ENCODE measurements at regions of chr9 and their contacts with region 1.

Region 1: DNA sequence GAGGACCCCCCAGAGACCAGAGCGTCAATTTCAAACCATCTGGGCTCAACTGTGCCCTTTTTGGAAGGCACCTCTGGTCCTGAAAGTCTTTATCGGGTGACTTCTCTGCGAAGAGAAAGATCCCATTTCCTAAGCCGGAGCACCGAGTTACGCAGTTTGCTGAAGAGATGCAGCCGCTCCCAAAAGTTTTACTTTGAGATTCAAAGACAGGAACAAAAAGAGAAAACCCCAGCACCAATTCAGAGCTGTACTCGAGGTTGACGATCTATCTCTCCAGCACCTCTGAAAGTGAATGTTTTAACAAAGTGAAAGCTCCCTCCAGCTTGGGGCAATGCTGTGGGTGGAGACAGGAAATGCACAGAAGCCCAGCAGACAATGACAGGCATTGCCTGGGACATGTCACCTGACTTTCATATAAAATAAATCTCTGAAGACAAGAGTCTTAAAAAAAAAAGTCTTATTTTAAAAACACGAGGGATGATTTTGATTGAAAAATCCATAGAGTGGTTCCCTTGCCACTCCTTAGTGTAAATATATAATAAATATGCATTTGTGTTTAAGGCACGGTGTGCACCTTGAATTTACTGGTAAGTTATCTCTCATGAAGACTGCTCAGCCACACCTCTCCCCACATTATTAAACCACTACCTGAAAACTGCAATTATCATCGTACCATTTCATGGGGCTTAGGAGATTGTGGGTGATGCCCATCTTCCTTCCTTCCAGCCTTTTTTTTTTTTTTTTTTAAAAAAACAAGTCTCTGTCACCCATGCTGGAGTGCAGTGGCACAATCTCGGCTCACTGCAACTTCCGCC is 79.9 kb downstream of the FNBP1 start:
- DNase-seq: peak; percentile 60 to 93 (median 66)
- ATAC-seq: peak; percentile 94
- H3K4me3 ChIP-seq: peak overlapping the region; percentile 64
- H3K4me3 Mint-ChIP-seq: peak overlapping the region; percentile 83
- H3K27ac ChIP-seq: peak overlapping the region; percentile 94 to 95
- H3K27ac Mint-ChIP-seq: peak overlapping the region; percentile 99
- H3K4me1 ChIP-seq: peaks cover 59% of the 10 kb centered on the region
- H3K4me1 Mint-ChIP-seq: peaks cover 80% of the 10 kb centered on the region
- H3K27me3 ChIP-seq: no peaks in the 10 kb centered on the region
- H3K27me3 Mint-ChIP-seq: no peaks in the 10 kb centered on the region
- CTCF ChIP-seq: no peak

Region 2: DNA sequence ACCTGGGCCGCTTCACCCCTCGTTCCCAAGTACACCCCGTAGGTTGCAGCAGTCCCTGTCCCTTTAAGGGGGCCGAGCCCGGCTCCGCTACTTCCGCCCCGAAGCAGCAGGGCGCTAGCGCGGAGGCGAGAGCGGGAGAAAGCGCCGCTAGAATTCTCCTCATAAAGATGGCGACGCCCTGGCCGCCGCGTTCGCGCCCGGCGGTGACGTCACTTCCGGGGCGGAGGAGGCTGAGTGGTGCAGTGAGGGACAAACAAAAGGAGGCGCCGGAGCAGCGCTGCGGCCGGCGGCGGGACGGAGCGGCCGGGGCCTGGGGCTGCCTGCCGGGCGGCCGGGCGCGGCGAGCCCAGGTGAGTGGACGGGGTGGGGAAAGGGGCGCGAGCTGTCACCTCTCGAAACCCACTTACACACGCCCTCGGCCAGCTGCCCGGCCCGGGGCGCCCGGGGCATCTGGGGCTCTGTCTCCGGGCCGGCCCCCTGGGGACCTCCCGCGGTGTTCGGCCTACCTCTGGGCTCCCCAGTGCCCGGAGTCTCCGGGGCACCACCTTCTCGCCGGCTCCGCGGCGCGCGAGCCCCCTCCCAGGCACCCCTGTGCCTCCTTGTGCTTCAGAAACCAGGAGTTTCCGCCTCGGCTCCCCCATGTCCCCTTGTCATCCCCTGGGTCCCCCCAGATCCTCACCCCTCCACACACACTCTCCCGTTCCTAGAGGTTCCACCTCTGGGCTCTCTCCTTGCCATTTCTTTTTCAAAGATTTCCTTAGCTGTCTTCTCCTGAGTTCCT is 1081.0 kb before region 1 on chr9 and contains the starts of genes KYAT1 and LRRC8A:
- CTCF ChIA-PET with region 1: no interaction called
- POLR2A ChIA-PET with region 1: no interaction called
- intact Hi-C with region 1: no loop called
- DNase-seq: peak; percentile 95 to 99 (median 98)
- ATAC-seq: peak; percentile 93
- H3K4me3 ChIP-seq: peak within 1 kb of the TSS; percentile 98
- H3K4me3 Mint-ChIP-seq: peak within 1 kb of the TSS; percentile 98
- H3K27ac ChIP-seq: peak within 1 kb of the TSS; percentile 72 to 77
- H3K27ac Mint-ChIP-seq: peak within 1 kb of the TSS; percentile 90
- H3K4me1 ChIP-seq: peaks cover 55% of the 10 kb centered on the region
- H3K4me1 Mint-ChIP-seq: peaks cover 76% of the 10 kb centered on the region
- H3K27me3 ChIP-seq: no peaks in the 10 kb centered on the region
- H3K27me3 Mint-ChIP-seq: no peaks in the 10 kb centered on the region
- CTCF ChIP-seq: no peak
- total RNA-seq, gene KYAT1: 2.8 to 4.7 TPM
- total RNA-seq, gene LRRC8A: 35.0 to 35.8 TPM

Region 3: DNA sequence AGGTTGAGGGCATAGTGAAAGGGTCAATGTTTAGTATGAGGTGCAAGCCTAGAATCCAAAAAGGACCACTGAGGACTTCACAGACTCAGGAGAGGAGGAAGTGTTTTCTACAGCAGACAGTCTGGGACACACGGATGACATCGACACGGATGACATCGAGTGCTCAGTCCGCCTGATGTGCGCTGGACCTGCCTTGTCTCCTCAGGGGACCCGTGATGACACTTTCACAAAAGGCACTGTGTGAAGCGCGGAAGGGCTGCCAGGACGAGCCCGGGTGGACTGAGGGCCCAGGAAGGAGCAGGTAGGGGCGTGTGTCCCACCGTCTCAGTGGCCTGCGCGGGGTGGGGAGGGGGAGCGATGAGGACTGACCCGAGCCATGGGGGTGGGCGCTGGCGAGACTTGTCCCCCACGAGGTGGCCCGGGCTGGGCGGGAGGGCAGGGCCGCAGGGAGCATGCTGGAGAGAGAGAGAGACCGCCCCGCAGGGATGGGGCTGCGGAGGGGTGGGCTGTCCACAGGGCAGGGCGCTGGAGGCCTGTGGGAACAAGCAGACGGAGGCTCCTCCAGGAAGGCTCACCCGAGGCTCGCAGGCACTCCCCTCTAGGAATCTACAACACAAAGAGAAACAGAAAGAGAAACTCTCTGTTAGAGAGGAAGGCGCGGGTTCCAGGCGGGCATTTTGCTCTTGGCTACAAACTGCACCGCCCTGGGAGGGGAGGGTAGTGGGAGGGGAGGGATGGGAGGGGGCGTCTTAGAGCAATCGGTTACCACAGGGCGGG is 73.0 kb before region 1 on chr9:
- CTCF ChIA-PET with region 1: interaction called, 8 read pairs
- POLR2A ChIA-PET with region 1: interaction called, 55 read pairs
- intact Hi-C with region 1: loop called (anchors 1 to 5 kb)
- DNase-seq: peak; percentile 46 to 91 (median 64)
- ATAC-seq: no peak
- H3K4me3 ChIP-seq: peak overlapping the region; percentile 50
- H3K4me3 Mint-ChIP-seq: peak overlapping the region; percentile 96
- H3K27ac ChIP-seq: peak overlapping the region; percentile 91 to 99
- H3K27ac Mint-ChIP-seq: peak overlapping the region; percentile 99
- H3K4me1 ChIP-seq: peaks cover 98% of the 10 kb centered on the region
- H3K4me1 Mint-ChIP-seq: peaks cover 87% of the 10 kb centered on the region
- H3K27me3 ChIP-seq: no peaks in the 10 kb centered on the region
- H3K27me3 Mint-ChIP-seq: no peaks in the 10 kb centered on the region
- CTCF ChIP-seq: no peak

Region 4: GRCh38 chr9:129932303-129933151 is 30.6 kb before region 1 on chr9:
- CTCF ChIA-PET with region 1: no interaction called
- POLR2A ChIA-PET with region 1: interaction called, 18 read pairs
- intact Hi-C with region 1: no loop called
- DNase-seq: peak in 2 of 14 experiments; percentile 55 to 57
- ATAC-seq: peak; percentile 35
- H3K4me3 ChIP-seq: no peak overlapping the region
- H3K4me3 Mint-ChIP-seq: peak overlapping the region; percentile 73
- H3K27ac ChIP-seq: peak overlapping the region; percentile 3 to 31
- H3K27ac Mint-ChIP-seq: peak overlapping the region; percentile 85
- H3K4me1 ChIP-seq: peaks cover 45% of the 10 kb centered on the region
- H3K4me1 Mint-ChIP-seq: peaks cover 59% of the 10 kb centered on the region
- H3K27me3 ChIP-seq: no peaks in the 10 kb centered on the region
- H3K27me3 Mint-ChIP-seq: no peaks in the 10 kb centered on the region
- CTCF ChIP-seq: no peak

Region 5: GRCh38 chr9:129944506-129945116 is 18.5 kb before region 1 on chr9:
- CTCF ChIA-PET with region 1: interaction called, 3 read pairs
- POLR2A ChIA-PET with region 1: interaction called, 32 read pairs
- intact Hi-C with region 1: loop called in 1 of 2 experiments (anchors 2 kb)
- DNase-seq: peak in 13 of 14 experiments; percentile 22 to 92 (median 33)
- ATAC-seq: peak; percentile 90
- H3K4me3 ChIP-seq: no peak overlapping the region
- H3K4me3 Mint-ChIP-seq: peak overlapping the region; percentile 56
- H3K27ac ChIP-seq: peak overlapping the region; percentile 12 to 58
- H3K27ac Mint-ChIP-seq: peak overlapping the region; percentile 76
- H3K4me1 ChIP-seq: peaks cover 46% of the 10 kb centered on the region
- H3K4me1 Mint-ChIP-seq: peaks cover 67% of the 10 kb centered on the region
- H3K27me3 ChIP-seq: no peaks in the 10 kb centered on the region
- H3K27me3 Mint-ChIP-seq: no peaks in the 10 kb centered on the region
- CTCF ChIP-seq: no peak

Region 6: DNA sequence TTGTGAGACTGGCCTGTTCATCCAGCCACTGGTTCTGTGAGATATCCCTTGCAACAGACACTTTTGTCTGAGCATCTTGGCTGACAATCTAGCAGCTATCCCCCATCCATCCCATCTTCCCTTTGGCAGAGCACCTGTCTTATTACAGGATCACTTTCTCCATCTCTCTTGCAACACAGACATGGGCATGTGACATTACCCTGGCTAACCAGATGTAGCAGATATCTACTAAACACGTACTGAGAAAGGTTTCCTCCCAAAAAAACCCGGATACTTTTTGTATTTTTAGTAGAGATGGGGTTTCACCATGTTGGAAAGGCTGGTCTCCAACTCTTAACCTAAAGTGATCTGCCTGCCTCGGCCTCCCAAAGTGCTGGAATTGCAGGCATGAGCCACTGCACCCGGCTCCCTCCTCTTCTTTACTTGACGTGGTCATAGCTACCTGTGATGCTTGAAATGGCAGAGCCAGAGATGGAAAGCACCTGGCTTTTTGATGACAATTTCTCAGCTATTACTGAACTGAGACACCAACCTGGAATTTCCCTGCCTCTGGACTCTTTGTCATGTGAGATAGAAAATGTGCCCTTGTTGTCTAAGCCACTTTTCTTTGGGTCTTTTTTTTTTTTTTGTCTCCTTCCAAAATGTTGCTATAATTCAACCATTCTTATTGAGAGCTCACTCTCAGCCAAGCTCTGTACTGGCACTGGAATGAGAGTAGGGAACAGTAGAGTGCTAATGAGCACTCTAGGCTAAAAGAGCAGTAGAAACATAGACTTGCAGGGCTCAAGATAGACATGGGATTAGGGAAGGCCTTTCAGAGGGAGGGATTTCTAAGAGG is 47.3 kb after region 1 on chr9:
- CTCF ChIA-PET with region 1: no interaction called
- POLR2A ChIA-PET with region 1: no interaction called
- intact Hi-C with region 1: loop called in 1 of 2 experiments (anchors 2 kb)
- DNase-seq: peak in 7 of 14 experiments; percentile 19 to 94 (median 51)
- ATAC-seq: peak; percentile 73
- H3K4me3 ChIP-seq: no peak overlapping the region
- H3K4me3 Mint-ChIP-seq: peak overlapping the region; percentile 54
- H3K27ac ChIP-seq: peak overlapping the region; percentile 90 to 92
- H3K27ac Mint-ChIP-seq: peak overlapping the region; percentile 93
- H3K4me1 ChIP-seq: peaks cover 62% of the 10 kb centered on the region
- H3K4me1 Mint-ChIP-seq: peaks cover 82% of the 10 kb centered on the region
- H3K27me3 ChIP-seq: no peaks in the 10 kb centered on the region
- H3K27me3 Mint-ChIP-seq: no peaks in the 10 kb centered on the region
- CTCF ChIP-seq: no peak

Region 7: GRCh38 chr9:130029223-130029973 is 66.3 kb after region 1 on chr9:
- CTCF ChIA-PET with region 1: no interaction called
- POLR2A ChIA-PET with region 1: interaction called, 6 read pairs
- intact Hi-C with region 1: loop called in 1 of 2 experiments (anchors 2 kb)
- DNase-seq: peak in 1 of 14 experiments; percentile 46
- ATAC-seq: no peak
- H3K4me3 ChIP-seq: peak overlapping the region; percentile 3
- H3K4me3 Mint-ChIP-seq: peak overlapping the region; percentile 32
- H3K27ac ChIP-seq: peak overlapping the region; percentile 12 to 78
- H3K27ac Mint-ChIP-seq: peak overlapping the region; percentile 92
- H3K4me1 ChIP-seq: peaks cover 83% of the 10 kb centered on the region
- H3K4me1 Mint-ChIP-seq: peaks cover 93% of the 10 kb centered on the region
- H3K27me3 ChIP-seq: no peaks in the 10 kb centered on the region
- H3K27me3 Mint-ChIP-seq: no peaks in the 10 kb centered on the region
- CTCF ChIP-seq: no peak

Region 8: DNA sequence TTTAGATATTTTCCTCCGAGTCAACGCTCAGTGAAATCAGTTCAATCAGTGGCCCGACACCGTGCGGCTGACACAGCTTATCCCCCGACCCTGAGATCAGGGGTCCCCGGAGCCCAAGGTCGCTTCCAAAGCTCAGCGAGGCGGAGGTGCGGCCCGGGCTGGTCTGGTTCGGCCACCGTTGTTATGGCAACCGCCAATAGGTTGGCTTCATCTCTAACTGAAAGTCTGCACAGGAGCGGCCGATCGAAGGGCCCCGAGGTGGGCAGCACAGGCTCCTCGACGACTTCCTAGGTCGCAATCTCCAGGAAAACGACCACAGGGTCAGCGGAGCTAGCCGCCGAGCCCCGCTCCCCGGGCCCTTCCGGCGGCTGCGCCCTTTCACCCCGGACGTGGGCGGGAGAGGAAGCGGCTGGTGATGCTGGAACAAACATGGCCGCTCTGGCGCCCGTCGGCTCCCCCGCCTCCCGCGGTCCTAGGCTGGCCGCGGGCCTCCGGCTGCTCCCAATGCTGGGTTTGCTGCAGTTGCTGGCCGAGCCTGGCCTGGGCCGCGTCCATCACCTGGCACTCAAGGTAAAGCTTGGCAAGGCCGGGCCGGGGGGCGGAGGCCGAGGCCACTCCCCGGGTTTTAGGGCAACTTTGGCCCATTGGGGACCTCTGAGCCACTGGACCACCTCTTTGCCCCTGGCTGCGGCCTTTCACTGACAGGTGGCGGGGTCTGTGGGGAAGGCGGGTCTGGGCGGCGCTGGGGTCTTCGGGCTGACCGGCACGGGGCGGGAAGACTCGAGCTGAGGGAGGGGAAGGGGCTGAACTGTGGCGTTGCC is 90.6 kb after region 1 on chr9 and contains the start of gene GPR107:
- CTCF ChIA-PET with region 1: no interaction called
- POLR2A ChIA-PET with region 1: interaction called, 12 read pairs
- intact Hi-C with region 1: no loop called
- DNase-seq: peak; percentile 47 to 87 (median 67)
- ATAC-seq: peak; percentile 96
- H3K4me3 ChIP-seq: peak within 1 kb of the TSS; percentile 92
- H3K4me3 Mint-ChIP-seq: peak within 1 kb of the TSS; percentile 93
- H3K27ac ChIP-seq: peak within 1 kb of the TSS; percentile 91 to 94
- H3K27ac Mint-ChIP-seq: peak within 1 kb of the TSS; percentile 93
- H3K4me1 ChIP-seq: peaks cover 39% of the 10 kb centered on the region
- H3K4me1 Mint-ChIP-seq: peaks cover 24% of the 10 kb centered on the region
- H3K27me3 ChIP-seq: no peaks in the 10 kb centered on the region
- H3K27me3 Mint-ChIP-seq: no peaks in the 10 kb centered on the region
- CTCF ChIP-seq: no peak
- total RNA-seq, gene GPR107: 18.9 to 19.2 TPM

Region 9: GRCh38 chr9:130265431-130266235 is 302.5 kb after region 1 on chr9 and contains the start of gene HMCN2:
- CTCF ChIA-PET with region 1: no interaction called
- POLR2A ChIA-PET with region 1: no interaction called
- intact Hi-C with region 1: no loop called
- DNase-seq: no peak
- ATAC-seq: no peak
- H3K4me3 ChIP-seq: no peak within 1 kb of the TSS
- H3K4me3 Mint-ChIP-seq: no peak within 1 kb of the TSS
- H3K27ac ChIP-seq: no peak within 1 kb of the TSS
- H3K27ac Mint-ChIP-seq: no peak within 1 kb of the TSS
- H3K4me1 ChIP-seq: no peaks in the 10 kb centered on the region
- H3K4me1 Mint-ChIP-seq: peaks cover 12% of the 10 kb centered on the region
- H3K27me3 ChIP-seq: peaks cover 53 to 81% of the 10 kb centered on the region in 2 experiments
- H3K27me3 Mint-ChIP-seq: peaks cover 86% of the 10 kb centered on the region
- CTCF ChIP-seq: no peak
- total RNA-seq, gene HMCN2: not detected

Measured in CD4-positive, alpha-beta T cell (primary cell).